CD4-positive, alpha-beta T cell (primary cell): ENCODE measurements at regions of chr4 and their contacts with region 1.

Region 1: GRCh38 chr4:119220751-119221150 is 8.2 kb downstream of the USP53 start:
- DNase-seq: no peak
- ATAC-seq: no peak
- H3K4me3 ChIP-seq: no peak overlapping the region
- H3K4me3 Mint-ChIP-seq: no peak overlapping the region
- H3K27ac ChIP-seq: no peak overlapping the region
- H3K27ac Mint-ChIP-seq: no peak overlapping the region
- H3K4me1 ChIP-seq: no peaks in the 10 kb centered on the region
- H3K4me1 Mint-ChIP-seq: peaks cover 27% of the 10 kb centered on the region
- H3K27me3 ChIP-seq: no peaks in the 10 kb centered on the region
- H3K27me3 Mint-ChIP-seq: no peaks in the 10 kb centered on the region
- CTCF ChIP-seq: no peak

Region 2: DNA sequence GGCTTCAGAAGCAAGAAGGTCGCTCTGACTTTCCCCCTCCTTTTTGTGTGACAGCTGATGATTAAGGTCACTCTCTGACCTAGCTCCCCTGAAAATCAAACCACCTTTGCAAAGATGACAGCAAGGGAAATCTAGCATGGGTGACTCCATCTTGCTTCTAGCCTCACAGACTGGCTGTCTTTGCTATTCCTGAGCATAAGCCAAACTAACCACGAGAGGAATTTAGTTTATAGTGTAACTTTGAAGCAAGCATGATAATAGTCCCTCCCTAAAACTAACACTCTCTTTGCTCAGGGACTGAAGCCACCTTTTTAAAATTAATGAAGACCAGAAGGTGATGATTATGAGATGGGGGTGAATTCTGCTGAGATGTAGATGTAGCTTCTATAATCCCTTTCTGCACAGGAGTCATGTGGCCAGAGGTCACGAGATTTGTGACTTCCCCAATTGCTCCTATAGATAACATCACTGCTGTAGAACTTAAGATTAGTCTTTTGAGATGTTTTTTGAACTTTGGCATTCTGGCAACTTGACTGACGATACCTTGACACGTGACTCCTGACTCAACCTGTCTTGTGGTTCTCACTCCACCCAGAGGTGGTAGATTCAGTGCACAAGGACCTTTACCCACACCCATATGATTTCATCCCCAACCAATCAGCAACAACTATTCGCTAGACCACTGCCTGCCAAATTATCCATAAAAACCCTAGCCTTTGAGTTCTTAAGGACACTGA is 422.7 kb after region 1 on chr4:
- CTCF ChIA-PET with region 1: no interaction called
- POLR2A ChIA-PET with region 1: no interaction called
- intact Hi-C with region 1: no loop called
- DNase-seq: no peak
- ATAC-seq: no peak
- H3K4me3 ChIP-seq: no peak overlapping the region
- H3K4me3 Mint-ChIP-seq: no peak overlapping the region
- H3K27ac ChIP-seq: no peak overlapping the region
- H3K27ac Mint-ChIP-seq: no peak overlapping the region
- H3K4me1 ChIP-seq: no peaks in the 10 kb centered on the region
- H3K4me1 Mint-ChIP-seq: no peaks in the 10 kb centered on the region
- H3K27me3 ChIP-seq: peaks cover 0 to 9% of the 10 kb centered on the region in 2 experiments
- H3K27me3 Mint-ChIP-seq: peaks cover 22% of the 10 kb centered on the region
- CTCF ChIP-seq: no peak

Region 3: GRCh38 chr4:120062663-120063195 is 842.0 kb after region 1 on chr4:
- CTCF ChIA-PET with region 1: no interaction called
- POLR2A ChIA-PET with region 1: no interaction called
- intact Hi-C with region 1: loop called in 1 of 2 experiments (anchors 5 kb)
- DNase-seq: no peak
- ATAC-seq: no peak
- H3K4me3 ChIP-seq: no peak overlapping the region
- H3K4me3 Mint-ChIP-seq: peak overlapping the region; percentile 20
- H3K27ac ChIP-seq: no peak overlapping the region
- H3K27ac Mint-ChIP-seq: peak overlapping the region; percentile 58
- H3K4me1 ChIP-seq: peaks cover 7% of the 10 kb centered on the region
- H3K4me1 Mint-ChIP-seq: peaks cover 50% of the 10 kb centered on the region
- H3K27me3 ChIP-seq: no peaks in the 10 kb centered on the region
- H3K27me3 Mint-ChIP-seq: no peaks in the 10 kb centered on the region
- CTCF ChIP-seq: no peak